CD4-positive, alpha-beta memory T cell (primary cell): ENCODE measurements at regions of chrX and their contacts with region 1.

Region 1: GRCh38 chrX:2608638-2609430 is 82.3 kb upstream of the CD99 start:
- DNase-seq: peak; percentile 78 to 87 (median 84)
- H3K4me3 ChIP-seq: peak overlapping the region; percentile 30 to 90
- H3K4me3 Mint-ChIP-seq: peak overlapping the region; percentile 91 to 97 (median 93)
- H3K27ac ChIP-seq: peak overlapping the region; percentile 59
- H3K27ac Mint-ChIP-seq: peak overlapping the region; percentile 84 to 94 (median 88)
- H3K4me1 ChIP-seq: peaks cover 35% of the 10 kb centered on the region
- H3K4me1 Mint-ChIP-seq: peaks cover 30 to 74% (median 52%) of the 10 kb centered on the region in 4 donors
- H3K27me3 ChIP-seq: no peaks in the 10 kb centered on the region
- H3K27me3 Mint-ChIP-seq: no peaks in the 10 kb centered on the region

Region 2: DNA sequence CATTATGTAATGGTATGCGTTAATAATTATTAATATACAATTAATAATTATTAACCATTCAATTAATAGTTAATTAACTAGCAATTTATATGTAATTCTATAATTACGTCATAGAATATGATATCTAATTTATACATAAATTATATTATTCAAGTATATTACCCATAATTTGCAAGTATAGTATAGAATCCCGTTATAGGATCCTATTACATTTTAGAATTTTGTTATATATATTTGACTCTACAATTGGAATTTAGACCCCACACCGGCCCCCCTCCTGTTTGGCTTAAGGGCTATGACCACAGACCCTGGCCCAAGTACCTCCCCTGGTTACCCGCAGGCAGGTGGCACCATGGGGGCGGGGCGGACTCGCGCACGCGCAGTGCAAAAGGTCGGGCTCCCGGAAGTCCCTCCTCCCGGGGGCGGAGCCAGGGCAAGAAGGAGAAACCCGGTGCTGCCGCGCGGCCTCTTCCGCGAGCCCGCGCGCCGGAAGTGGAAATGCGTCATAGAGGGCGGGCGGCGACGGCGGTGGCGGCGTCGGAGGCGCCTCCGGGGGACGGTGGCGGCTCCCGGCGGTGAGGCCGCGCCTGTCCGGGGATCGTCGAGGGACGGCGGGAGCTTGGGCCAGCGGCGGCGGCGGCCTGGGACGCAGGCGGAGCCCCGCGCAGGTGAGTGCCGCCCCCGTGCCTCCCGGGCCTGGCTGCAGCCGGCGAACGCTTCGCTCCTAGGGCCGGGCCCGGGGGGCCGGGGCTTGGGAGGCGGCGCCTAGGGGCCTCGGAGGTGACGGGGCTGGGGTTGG is 1017.5 kb before region 1 on chrX and contains the start of gene AKAP17A:
- CTCF ChIA-PET with region 1: no interaction called
- POLR2A ChIA-PET with region 1: no interaction called
- intact Hi-C with region 1: loop called (anchors 2 kb)
- DNase-seq: peak; percentile 93 to 99 (median 97)
- H3K4me3 ChIP-seq: peak within 1 kb of the TSS; percentile 21 to 77
- H3K4me3 Mint-ChIP-seq: peak within 1 kb of the TSS; percentile 89 to 93 (median 92)
- H3K27ac ChIP-seq: peak within 1 kb of the TSS; percentile 73
- H3K27ac Mint-ChIP-seq: peak within 1 kb of the TSS; percentile 92 to 96 (median 94)
- H3K4me1 ChIP-seq: peaks cover 41% of the 10 kb centered on the region
- H3K4me1 Mint-ChIP-seq: peaks cover 10 to 33% (median 24%) of the 10 kb centered on the region in 4 donors
- H3K27me3 ChIP-seq: no peaks in the 10 kb centered on the region
- H3K27me3 Mint-ChIP-seq: no peaks in the 10 kb centered on the region
- total RNA-seq, gene AKAP17A: 147 to 150 TPM

Region 3: GRCh38 chrX:2188330-2188792 is 420.5 kb before region 1 on chrX:
- CTCF ChIA-PET with region 1: no interaction called
- POLR2A ChIA-PET with region 1: no interaction called
- intact Hi-C with region 1: no loop called
- DNase-seq: no peak
- H3K4me3 ChIP-seq: no peak overlapping the region
- H3K4me3 Mint-ChIP-seq: no peak overlapping the region
- H3K27ac ChIP-seq: no peak overlapping the region
- H3K27ac Mint-ChIP-seq: no peak overlapping the region
- H3K4me1 ChIP-seq: no peaks in the 10 kb centered on the region
- H3K4me1 Mint-ChIP-seq: peaks cover 0 to 2% (median under 1%) of the 10 kb centered on the region in 4 donors
- H3K27me3 ChIP-seq: no peaks in the 10 kb centered on the region
- H3K27me3 Mint-ChIP-seq: no peaks in the 10 kb centered on the region